CD4-positive, alpha-beta memory T cell (primary cell): ENCODE measurements at regions of chr4 and their contacts with region 1.

Region 1: DNA sequence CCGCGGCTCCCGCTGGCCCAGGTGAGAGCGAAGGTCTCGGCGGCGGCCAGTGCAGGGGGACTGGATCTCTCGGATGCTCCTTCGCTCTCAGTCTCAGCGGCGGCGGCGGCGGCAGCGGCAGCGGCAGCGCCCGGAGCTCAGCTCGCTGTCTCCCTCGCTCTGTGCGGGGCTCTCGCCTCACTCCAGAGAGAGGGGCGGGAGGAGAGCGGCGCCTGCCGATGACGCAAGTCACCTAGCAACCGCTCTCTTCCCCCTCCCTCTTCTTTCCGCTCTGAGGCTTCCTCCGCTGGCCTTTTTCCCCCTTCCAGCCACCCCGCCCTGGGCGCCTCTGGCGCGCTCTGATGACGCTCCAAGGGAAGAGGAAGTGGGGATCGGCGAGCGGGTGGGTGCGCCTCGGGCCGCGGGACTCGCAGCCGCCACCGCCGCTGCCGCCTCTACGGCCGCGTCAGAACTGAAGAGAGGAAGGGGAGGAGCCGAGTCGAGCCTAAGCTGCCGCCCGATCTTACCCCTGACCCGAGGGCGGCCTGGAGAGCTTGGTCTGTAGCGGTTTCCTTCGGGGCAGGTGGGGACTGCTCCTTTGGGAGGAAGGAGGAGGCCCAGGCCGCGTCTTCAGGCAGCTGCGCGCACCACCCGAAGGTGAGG is at the start of gene FBXW7:
- DNase-seq: peak; percentile 99 to 100 (median 100)
- H3K4me3 ChIP-seq: peak within 1 kb of the TSS; percentile 66 to 93
- H3K4me3 Mint-ChIP-seq: peak within 1 kb of the TSS; percentile 96 to 99 (median 98)
- H3K27ac ChIP-seq: peak within 1 kb of the TSS; percentile 87
- H3K27ac Mint-ChIP-seq: peak within 1 kb of the TSS; percentile 93 to 100 (median 99)
- H3K4me1 ChIP-seq: peaks cover 72% of the 10 kb centered on the region
- H3K4me1 Mint-ChIP-seq: peaks cover 43 to 77% (median 62%) of the 10 kb centered on the region in 4 donors
- H3K27me3 ChIP-seq: no peaks in the 10 kb centered on the region
- H3K27me3 Mint-ChIP-seq: no peaks in the 10 kb centered on the region
- total RNA-seq, gene FBXW7: 138 to 148 TPM

Region 2: GRCh38 chr4:151099229-151099975 is 1436.6 kb before region 1 on chr4 and contains the start of gene RPS3A:
- CTCF ChIA-PET with region 1: no interaction called
- POLR2A ChIA-PET with region 1: interaction called, 4 read pairs
- intact Hi-C with region 1: loop called (anchors 1 kb)
- DNase-seq: peak; percentile 99 to 100 (median 99)
- H3K4me3 ChIP-seq: peak within 1 kb of the TSS; percentile 79 to 82
- H3K4me3 Mint-ChIP-seq: peak within 1 kb of the TSS; percentile 91 to 99 (median 96)
- H3K27ac ChIP-seq: peak within 1 kb of the TSS; percentile 86
- H3K27ac Mint-ChIP-seq: peak within 1 kb of the TSS; percentile 95 to 99 (median 98)
- H3K4me1 ChIP-seq: peaks cover 32% of the 10 kb centered on the region
- H3K4me1 Mint-ChIP-seq: peaks cover 19 to 41% (median 27%) of the 10 kb centered on the region in 4 donors
- H3K27me3 ChIP-seq: no peaks in the 10 kb centered on the region
- H3K27me3 Mint-ChIP-seq: peaks cover 0 to 3% of the 10 kb centered on the region in 2 donors
- total RNA-seq, gene RPS3A: 4,011 to 4,334 TPM

Region 3: DNA sequence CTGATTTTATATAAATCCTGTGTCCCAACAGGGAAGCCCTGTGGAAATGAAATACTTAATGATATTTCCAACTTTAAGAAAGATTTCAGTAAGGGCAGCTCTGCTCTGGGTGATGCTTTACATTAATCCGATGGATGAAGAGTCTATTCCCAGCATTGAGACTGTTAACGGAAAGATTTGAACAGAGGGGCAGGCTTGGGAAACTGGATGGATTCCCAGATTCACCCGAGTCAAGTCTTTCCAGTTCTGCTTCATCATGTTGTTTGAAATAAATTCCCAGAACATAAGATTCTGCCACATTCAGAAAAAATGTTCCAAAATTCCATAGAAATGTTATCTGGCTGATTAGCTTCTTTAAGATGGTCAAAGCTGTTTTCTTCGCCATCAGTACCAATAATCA is 246.1 kb before region 1 on chr4:
- CTCF ChIA-PET with region 1: no interaction called
- POLR2A ChIA-PET with region 1: no interaction called
- intact Hi-C with region 1: no loop called
- DNase-seq: no peak
- H3K4me3 ChIP-seq: no peak overlapping the region
- H3K4me3 Mint-ChIP-seq: no peak overlapping the region
- H3K27ac ChIP-seq: no peak overlapping the region
- H3K27ac Mint-ChIP-seq: no peak overlapping the region
- H3K4me1 ChIP-seq: no peaks in the 10 kb centered on the region
- H3K4me1 Mint-ChIP-seq: no peaks in the 10 kb centered on the region
- H3K27me3 ChIP-seq: no peaks in the 10 kb centered on the region
- H3K27me3 Mint-ChIP-seq: no peaks in the 10 kb centered on the region

Region 4: GRCh38 chr4:152500800-152501434 is 35.1 kb before region 1 on chr4:
- CTCF ChIA-PET with region 1: interaction called, 53 read pairs
- POLR2A ChIA-PET with region 1: interaction called, 59 read pairs
- intact Hi-C with region 1: loop called (anchors 2 kb)
- DNase-seq: peak; percentile 76 to 82 (median 80)
- H3K4me3 ChIP-seq: no peak overlapping the region
- H3K4me3 Mint-ChIP-seq: no peak overlapping the region
- H3K27ac ChIP-seq: no peak overlapping the region
- H3K27ac Mint-ChIP-seq: peak overlapping the region in 6 of 7 donors; percentile 0 to 85 (median 58)
- H3K4me1 ChIP-seq: peaks cover 6% of the 10 kb centered on the region
- H3K4me1 Mint-ChIP-seq: peaks cover 27 to 44% (median 36%) of the 10 kb centered on the region in 4 donors
- H3K27me3 ChIP-seq: no peaks in the 10 kb centered on the region
- H3K27me3 Mint-ChIP-seq: no peaks in the 10 kb centered on the region

Region 5: DNA sequence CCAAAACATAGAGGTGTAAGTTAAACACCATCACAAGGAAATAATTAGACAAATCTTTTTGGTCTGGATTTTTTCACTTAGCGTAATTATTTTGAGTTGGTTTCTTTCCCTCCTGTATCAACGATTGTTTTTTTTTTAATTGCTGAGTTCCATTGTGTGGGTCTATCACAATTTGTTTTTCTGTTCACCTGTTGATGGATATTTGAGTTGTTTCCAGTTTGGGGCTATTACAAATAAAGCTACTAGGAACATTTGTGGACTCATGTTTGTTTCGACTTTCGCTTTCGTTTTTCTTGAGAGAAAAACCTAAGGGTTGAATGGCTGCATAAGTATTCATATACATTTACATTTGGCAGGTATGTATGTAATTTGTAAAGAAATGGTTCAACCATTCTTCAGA is 20.3 kb after region 1 on chr4:
- CTCF ChIA-PET with region 1: interaction called, 76 read pairs
- POLR2A ChIA-PET with region 1: interaction called, 327 read pairs
- intact Hi-C with region 1: loop called (anchors 1 kb)
- DNase-seq: peak in 2 of 5 donors; percentile 17 to 22
- H3K4me3 ChIP-seq: peak overlapping the region; percentile 9 to 22
- H3K4me3 Mint-ChIP-seq: peak overlapping the region; percentile 79 to 89 (median 86)
- H3K27ac ChIP-seq: peak overlapping the region; percentile 14
- H3K27ac Mint-ChIP-seq: peak overlapping the region; percentile 55 to 95 (median 94)
- H3K4me1 ChIP-seq: peaks cover 50% of the 10 kb centered on the region
- H3K4me1 Mint-ChIP-seq: peaks cover 29 to 57% (median 42%) of the 10 kb centered on the region in 4 donors
- H3K27me3 ChIP-seq: no peaks in the 10 kb centered on the region
- H3K27me3 Mint-ChIP-seq: no peaks in the 10 kb centered on the region

Region 6: GRCh38 chr4:152591396-152591795 is 55.4 kb after region 1 on chr4:
- CTCF ChIA-PET with region 1: interaction called, 3 read pairs
- POLR2A ChIA-PET with region 1: interaction called, 63 read pairs
- intact Hi-C with region 1: no loop called
- DNase-seq: peak in 3 of 5 donors; percentile 12 to 28 (median 24)
- H3K4me3 ChIP-seq: no peak overlapping the region
- H3K4me3 Mint-ChIP-seq: peak overlapping the region; percentile 21 to 73 (median 62)
- H3K27ac ChIP-seq: no peak overlapping the region
- H3K27ac Mint-ChIP-seq: peak overlapping the region in 3 of 7 donors; percentile 31 to 53 (median 43)
- H3K4me1 ChIP-seq: peaks cover 5% of the 10 kb centered on the region
- H3K4me1 Mint-ChIP-seq: peaks cover 4 to 10% (median 7%) of the 10 kb centered on the region in 4 donors
- H3K27me3 ChIP-seq: no peaks in the 10 kb centered on the region
- H3K27me3 Mint-ChIP-seq: peaks cover 0 to 1% of the 10 kb centered on the region in 2 donors

Region 7: GRCh38 chr4:152679414-152680281 is 143.6 kb after region 1 on chr4 and contains the start of gene TMEM154:
- CTCF ChIA-PET with region 1: interaction called, 4 read pairs
- POLR2A ChIA-PET with region 1: interaction called, 36 read pairs
- intact Hi-C with region 1: loop called (anchors 1 kb)
- DNase-seq: peak; percentile 78 to 82 (median 81)
- H3K4me3 ChIP-seq: peak within 1 kb of the TSS; percentile 30 to 62
- H3K4me3 Mint-ChIP-seq: peak within 1 kb of the TSS; percentile 91 to 97 (median 96)
- H3K27ac ChIP-seq: peak within 1 kb of the TSS; percentile 69
- H3K27ac Mint-ChIP-seq: peak within 1 kb of the TSS; percentile 90 to 98 (median 96)
- H3K4me1 ChIP-seq: peaks cover 47% of the 10 kb centered on the region
- H3K4me1 Mint-ChIP-seq: peaks cover 36 to 55% (median 47%) of the 10 kb centered on the region in 4 donors
- H3K27me3 ChIP-seq: no peaks in the 10 kb centered on the region
- H3K27me3 Mint-ChIP-seq: no peaks in the 10 kb centered on the region
- total RNA-seq, gene TMEM154: 35.2 to 38.6 TPM